ENCODE measurements at regions of chr20 and their contacts with region 1.

Region 1: DNA sequence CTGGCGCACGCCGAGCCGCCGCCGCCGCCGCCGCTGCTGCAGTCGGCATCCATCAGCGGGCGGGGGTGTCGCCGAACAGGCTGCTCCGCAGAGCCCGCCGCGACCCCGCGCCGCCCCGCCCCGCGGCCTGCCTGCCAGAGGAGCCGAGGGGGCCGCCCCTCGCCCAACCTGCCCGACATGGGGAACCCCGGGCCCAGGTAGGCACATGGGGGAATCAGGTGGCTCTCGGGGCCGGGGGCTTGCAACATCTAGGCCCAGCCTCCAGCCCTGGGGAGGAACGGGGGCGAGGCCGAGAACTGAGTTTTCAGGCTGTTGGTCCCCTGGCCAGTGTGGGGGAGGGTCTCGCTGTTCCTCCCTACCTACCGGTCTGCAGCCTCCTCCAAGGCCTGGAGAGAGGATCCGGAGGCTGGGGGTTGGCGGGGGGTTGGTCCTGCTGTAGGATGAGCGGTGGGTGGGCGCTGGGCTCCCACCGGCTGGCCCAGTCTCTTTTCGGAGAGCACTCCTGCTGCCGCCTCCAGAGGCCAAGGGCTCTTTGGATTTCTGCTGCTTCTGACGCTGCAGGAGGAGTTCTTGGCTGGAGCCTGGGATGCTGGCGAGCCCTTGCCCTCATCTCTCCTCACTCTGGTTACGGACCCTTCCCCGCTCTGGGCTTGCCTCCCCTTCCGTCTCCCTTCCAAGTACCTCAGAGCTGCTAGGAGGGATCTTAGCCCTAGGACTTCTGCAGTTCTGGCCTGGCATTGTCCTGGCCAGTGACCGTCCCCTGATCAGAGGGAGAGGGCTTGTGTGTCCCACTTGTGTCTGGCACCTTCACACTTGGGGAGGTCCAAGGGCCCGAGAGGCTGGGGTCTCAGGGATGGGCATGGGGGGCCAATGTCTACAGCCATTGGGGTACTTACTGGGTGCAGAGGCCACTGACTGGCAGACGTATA is at the start of gene EPB41L1:
- DNase-seq: peak in 1 of 2 donors; percentile 24
- ATAC-seq: peak in 3 of 4 donors; percentile 3 to 8 (median 5)
- H3K4me3 ChIP-seq: peak within 1 kb of the TSS; percentile 72
- H3K27ac ChIP-seq: peak within 1 kb of the TSS; percentile 36
- H3K4me1 ChIP-seq: peaks cover 6% of the 10 kb centered on the region
- H3K27me3 ChIP-seq: no peaks in the 10 kb centered on the region
- CTCF ChIP-seq: no peak
- total RNA-seq, gene EPB41L1: 9.1 to 24.1 (median 9.9) TPM

Region 2: GRCh38 chr20:36199345-36200257 is 44.6 kb after region 1 on chr20:
- intact Hi-C with region 1: loop called (anchors 1 to 5 kb)
- DNase-seq: peak; percentile 75 to 81
- ATAC-seq: peak; percentile 84 to 92 (median 86)
- H3K4me3 ChIP-seq: no peak overlapping the region
- H3K27ac ChIP-seq: no peak overlapping the region
- H3K4me1 ChIP-seq: no peaks in the 10 kb centered on the region
- H3K27me3 ChIP-seq: no peaks in the 10 kb centered on the region
- CTCF ChIP-seq: peak; percentile 94

Region 3: DNA sequence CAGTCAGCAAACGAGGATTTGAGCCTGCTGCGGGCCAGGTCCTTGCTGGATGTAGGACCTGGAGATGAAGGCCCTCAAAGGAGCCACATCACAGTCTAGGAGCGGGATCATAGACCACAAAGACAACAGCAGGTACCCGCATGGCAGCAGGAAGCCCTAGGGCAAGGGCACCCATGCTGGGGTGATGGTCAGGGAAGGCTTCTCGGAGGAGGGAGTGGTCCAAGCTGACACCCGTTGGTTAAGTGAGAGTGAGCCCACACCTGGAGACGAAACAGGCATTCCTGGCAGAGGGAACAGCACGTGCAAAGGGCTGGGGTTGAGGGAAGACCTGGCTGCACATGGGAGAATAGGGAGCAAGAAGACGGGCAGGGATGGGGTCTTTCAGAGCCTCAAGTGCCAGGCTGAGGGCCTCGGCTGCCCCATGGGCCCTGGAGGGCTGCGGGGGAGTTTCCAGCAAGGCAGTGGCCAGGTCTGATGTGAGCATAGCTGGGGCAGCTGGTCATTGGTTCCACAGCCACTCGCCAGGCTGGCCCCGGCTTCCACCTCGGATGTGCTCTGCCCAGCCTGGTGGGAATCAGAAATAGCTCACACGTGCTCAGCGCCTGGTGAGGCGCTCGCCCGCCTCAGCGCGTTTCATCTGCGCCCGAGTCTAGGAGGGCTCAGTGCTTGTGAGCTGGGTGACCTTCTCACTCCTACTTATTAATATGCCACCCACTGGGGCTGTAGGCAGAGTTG is 166.2 kb after region 1 on chr20:
- intact Hi-C with region 1: no loop called
- DNase-seq: peak in 1 of 2 donors; percentile 14
- ATAC-seq: no peak
- H3K4me3 ChIP-seq: no peak overlapping the region
- H3K27ac ChIP-seq: no peak overlapping the region
- H3K4me1 ChIP-seq: no peaks in the 10 kb centered on the region
- H3K27me3 ChIP-seq: peaks cover 0 to 2% (median 0%) of the 10 kb centered on the region in 3 donors
- CTCF ChIP-seq: no peak

Measured in psoas muscle (tissue), 8 donors.